WTC11 (cell line): ENCODE measurements at regions of chr12 and their contacts with region 1.

Region 1: GRCh38 chr12:11746024-11746771 is 96.7 kb downstream of the ETV6 start:
- DNase-seq: no peak
- ATAC-seq: no peak
- H3K4me3 Mint-ChIP-seq: no peak overlapping the region
- H3K27ac Mint-ChIP-seq: 0 out of 2 replicates have a peak overlapping the region, but pooled peaks have one; percentile 32
- H3K4me1 Mint-ChIP-seq: peaks cover 73% of the 10 kb centered on the region
- H3K27me3 Mint-ChIP-seq: no peaks in the 10 kb centered on the region
- CTCF ChIP-seq: no peak

Region 2: DNA sequence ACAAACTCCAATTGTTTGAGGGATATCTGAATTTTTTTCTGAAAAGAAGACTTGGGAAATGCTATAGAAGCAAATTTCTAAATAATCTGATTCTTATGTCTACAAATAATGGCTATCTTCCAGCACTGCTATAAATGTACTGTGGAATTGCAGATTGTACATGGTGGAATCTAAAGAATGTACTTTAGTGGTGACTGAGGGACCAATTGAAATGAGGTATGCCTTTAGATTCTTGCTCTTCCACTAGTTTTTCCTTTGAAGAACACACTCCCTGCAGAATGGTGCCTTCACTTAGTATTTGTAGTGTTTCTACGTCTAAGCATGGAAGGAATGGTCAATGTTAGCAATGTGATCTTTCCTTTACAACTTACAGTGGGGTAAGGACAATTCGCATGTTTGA is 424.2 kb before region 1 on chr12:
- CTCF ChIA-PET with region 1: no interaction called
- POLR2A ChIA-PET with region 1: no interaction called
- DNase-seq: no peak
- ATAC-seq: no peak
- H3K4me3 Mint-ChIP-seq: no peak overlapping the region
- H3K27ac Mint-ChIP-seq: no peak overlapping the region
- H3K4me1 Mint-ChIP-seq: no peaks in the 10 kb centered on the region
- H3K27me3 Mint-ChIP-seq: peaks cover 2% of the 10 kb centered on the region; the same call in 1 of the 2 replicates
- CTCF ChIP-seq: no peak

Region 3: DNA sequence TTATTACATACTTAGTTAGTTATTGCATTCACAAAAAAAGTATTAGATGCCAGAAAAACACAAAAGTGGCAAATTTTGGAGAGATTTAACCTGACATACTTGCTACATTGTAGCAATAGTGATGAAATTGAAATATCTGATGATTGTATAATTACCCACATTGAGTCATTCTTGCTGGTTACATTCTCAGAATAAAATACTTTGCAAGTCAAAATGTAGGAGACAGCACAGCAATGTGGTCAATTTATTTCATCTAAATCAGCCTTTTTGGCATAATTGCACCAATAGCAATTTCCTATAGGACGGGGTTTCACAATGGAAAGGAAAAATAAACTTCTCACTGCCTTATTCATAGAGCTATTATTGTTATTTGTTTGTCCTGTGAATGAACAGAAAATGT is 221.8 kb before region 1 on chr12:
- CTCF ChIA-PET with region 1: no interaction called
- POLR2A ChIA-PET with region 1: no interaction called
- DNase-seq: no peak
- ATAC-seq: no peak
- H3K4me3 Mint-ChIP-seq: no peak overlapping the region
- H3K27ac Mint-ChIP-seq: no peak overlapping the region
- H3K4me1 Mint-ChIP-seq: no peaks in the 10 kb centered on the region
- H3K27me3 Mint-ChIP-seq: no peaks in the 10 kb centered on the region; the same call in 1 of the 2 replicates
- CTCF ChIP-seq: no peak

Region 4: DNA sequence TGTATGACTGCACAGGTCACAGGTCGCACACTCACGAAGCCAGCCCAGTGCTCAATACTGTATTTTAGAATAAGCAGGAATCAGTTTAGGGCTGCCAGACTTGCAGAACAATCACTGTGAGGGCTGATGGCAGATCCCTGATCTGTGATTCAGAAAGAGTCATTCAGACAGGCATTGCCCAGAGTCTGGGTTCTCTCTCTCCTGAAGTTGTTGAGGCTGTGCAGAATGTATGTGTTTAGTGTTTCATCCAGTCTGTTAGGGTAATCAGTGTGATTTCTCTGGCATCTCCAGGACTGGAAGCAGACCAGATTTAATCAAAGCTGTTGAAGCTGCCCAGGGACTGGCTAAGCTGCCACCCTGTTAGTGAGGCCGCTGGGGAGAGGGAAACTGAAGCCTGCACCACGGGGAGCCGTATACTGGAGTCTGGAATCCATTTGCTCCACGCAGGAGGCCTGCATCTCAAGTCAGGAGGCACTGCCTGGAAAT is 27.4 kb before region 1 on chr12:
- CTCF ChIA-PET with region 1: no interaction called
- POLR2A ChIA-PET with region 1: no interaction called
- DNase-seq: no peak
- ATAC-seq: peak; percentile 14
- H3K4me3 Mint-ChIP-seq: no peak overlapping the region
- H3K27ac Mint-ChIP-seq: no peak overlapping the region; the same call in 1 of the 2 replicates
- H3K4me1 Mint-ChIP-seq: peaks cover 38% of the 10 kb centered on the region
- H3K27me3 Mint-ChIP-seq: no peaks in the 10 kb centered on the region
- CTCF ChIP-seq: no peak

Region 5: GRCh38 chr12:11730299-11731041 is 15.7 kb before region 1 on chr12:
- CTCF ChIA-PET with region 1: interaction called, 44 read pairs
- POLR2A ChIA-PET with region 1: no interaction called
- DNase-seq: no peak
- ATAC-seq: no peak
- H3K4me3 Mint-ChIP-seq: no peak overlapping the region
- H3K27ac Mint-ChIP-seq: no peak overlapping the region
- H3K4me1 Mint-ChIP-seq: peaks cover 43% of the 10 kb centered on the region
- H3K27me3 Mint-ChIP-seq: no peaks in the 10 kb centered on the region
- CTCF ChIP-seq: no peak